Activated CD4-positive, alpha-beta T cell treated with anti-CD3 and anti-CD28 coated beads, Interleukin-2, amount 10 ng/mL, durations not matched to agents 7 days and 5 days (primary cell): ENCODE measurements at regions of chr10 and their contacts with region 1.

Region 1: DNA sequence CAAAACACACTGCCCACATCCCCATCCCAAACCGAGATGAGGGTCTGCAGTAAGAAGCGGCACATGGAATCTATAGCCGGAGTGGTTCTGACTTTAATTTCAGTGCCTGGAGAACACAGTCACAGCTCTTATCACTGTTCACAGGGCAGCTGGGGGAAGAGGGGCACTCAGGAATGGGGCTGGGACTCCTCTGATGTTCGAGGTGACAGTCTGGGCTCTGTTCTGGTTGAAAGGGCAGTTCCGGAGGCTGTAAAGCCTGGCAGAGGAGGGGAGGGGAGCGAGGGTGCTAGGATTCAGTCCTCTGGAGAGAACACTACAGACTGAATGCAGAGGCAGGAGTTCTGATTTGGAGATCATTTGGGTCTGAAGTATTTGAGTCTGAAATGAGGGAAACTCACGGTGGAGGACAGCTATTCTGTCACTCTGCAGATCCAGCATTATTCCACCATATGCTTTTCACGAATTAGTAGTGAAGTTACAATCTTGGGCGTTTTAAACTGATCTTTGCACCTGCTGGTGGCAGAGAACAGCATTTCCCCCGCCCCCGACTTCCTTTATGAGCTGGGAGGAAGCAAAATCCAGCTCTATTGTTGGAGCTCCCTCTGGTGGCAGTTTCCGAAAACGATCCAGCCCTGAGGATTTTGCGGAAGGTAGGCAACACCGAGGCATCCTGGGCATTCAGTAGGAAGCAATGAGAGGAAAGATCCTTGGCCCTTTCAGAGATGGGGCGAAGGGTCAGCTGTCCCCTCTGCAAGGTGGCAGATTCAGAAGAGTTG is 22.7 kb upstream of the KCNK18 start:
- DNase-seq: peak; percentile 84
- H3K4me3 Mint-ChIP-seq: peak overlapping the region; percentile 77
- H3K27ac Mint-ChIP-seq: peak overlapping the region; percentile 87
- H3K4me1 Mint-ChIP-seq: peaks cover 18% of the 10 kb centered on the region
- H3K27me3 Mint-ChIP-seq: peaks cover 39% of the 10 kb centered on the region

Region 2: DNA sequence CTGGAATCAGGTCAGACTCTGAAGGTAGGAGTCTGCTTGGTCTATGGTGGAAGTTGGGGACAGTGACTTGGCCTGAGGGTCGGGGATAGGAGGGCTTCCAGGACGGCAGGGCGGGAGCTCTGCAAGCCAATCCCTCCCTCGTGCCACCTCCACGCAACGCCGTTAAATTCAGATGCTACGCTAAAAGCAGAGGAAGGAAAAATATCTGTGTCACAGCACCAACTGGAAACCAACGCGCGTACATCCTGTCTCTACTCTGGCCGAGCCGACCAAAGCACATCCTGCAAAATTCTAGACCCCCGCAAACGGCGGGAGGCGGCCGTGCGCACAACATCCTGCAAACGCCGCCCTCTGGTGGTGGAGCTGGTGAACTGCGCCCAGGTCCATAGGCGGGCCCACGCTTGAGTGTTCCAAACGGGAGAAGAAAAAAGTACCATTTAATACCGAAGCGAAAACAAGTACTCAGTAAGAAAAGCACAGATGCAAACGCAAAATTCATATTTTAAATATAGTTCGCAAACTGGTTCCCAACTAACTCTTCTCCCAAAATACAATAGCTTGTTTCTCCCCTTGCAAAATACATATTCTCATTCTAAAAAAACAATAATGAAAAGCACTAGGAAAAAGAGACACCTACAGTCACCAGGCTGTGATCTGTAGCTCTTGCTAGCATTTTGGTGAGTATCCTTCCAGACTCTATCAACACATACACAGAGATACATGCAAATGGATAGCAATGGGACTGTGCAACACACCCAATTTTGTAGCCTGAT is 386.5 kb before region 1 on chr10:
- CTCF ChIA-PET with region 1: interaction called, 19 read pairs
- POLR2A ChIA-PET with region 1: no interaction called
- DNase-seq: peak; percentile 81
- H3K4me3 Mint-ChIP-seq: peak overlapping the region; percentile 23
- H3K27ac Mint-ChIP-seq: peak overlapping the region; percentile 75
- H3K4me1 Mint-ChIP-seq: peaks cover 14% of the 10 kb centered on the region
- H3K27me3 Mint-ChIP-seq: peaks cover 8% of the 10 kb centered on the region

Region 3: DNA sequence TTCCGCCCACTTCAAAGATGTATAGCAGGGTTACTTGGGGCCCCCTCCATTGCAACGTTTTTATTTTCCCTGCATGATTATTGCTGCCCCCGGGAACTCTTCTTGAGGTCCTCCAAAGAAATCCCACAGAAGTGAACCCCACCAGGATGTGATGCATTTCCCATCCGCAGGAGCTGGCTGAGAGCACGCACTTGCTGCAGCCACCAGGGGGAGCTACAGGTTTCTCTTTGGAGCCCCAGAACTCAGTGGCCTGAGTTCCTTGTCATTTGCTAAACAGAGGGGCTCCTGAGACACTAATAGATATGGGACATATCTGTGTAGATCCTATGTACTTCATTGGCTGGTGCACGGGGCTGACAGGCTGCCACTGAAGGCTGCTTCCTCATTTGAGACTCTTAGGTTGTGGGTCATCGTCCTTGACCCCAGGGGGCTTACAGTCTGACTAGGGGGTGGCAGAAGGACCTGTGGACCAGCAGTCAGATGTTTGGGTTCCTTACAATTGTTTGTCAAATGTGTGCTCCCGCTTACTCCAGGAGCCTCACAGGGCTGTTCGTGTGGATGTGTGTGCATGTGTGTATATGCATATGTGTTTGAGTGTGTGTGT is 377.6 kb before region 1 on chr10:
- CTCF ChIA-PET with region 1: interaction called, 24 read pairs
- POLR2A ChIA-PET with region 1: no interaction called
- DNase-seq: peak; percentile 75
- H3K4me3 Mint-ChIP-seq: no peak overlapping the region
- H3K27ac Mint-ChIP-seq: no peak overlapping the region
- H3K4me1 Mint-ChIP-seq: no peaks in the 10 kb centered on the region
- H3K27me3 Mint-ChIP-seq: peaks cover 4% of the 10 kb centered on the region